RWPE1 (cell line): ENCODE measurements at regions of chr14 and their contacts with region 1.

Region 1: GRCh38 chr14:90399541-90400444 is 3.0 kb downstream of the CALM1 start:
- DNase-seq: peak; percentile 91
- H3K27ac ChIP-seq: peak overlapping the region; percentile 40
- CTCF ChIP-seq: peak; percentile 99

Region 2: DNA sequence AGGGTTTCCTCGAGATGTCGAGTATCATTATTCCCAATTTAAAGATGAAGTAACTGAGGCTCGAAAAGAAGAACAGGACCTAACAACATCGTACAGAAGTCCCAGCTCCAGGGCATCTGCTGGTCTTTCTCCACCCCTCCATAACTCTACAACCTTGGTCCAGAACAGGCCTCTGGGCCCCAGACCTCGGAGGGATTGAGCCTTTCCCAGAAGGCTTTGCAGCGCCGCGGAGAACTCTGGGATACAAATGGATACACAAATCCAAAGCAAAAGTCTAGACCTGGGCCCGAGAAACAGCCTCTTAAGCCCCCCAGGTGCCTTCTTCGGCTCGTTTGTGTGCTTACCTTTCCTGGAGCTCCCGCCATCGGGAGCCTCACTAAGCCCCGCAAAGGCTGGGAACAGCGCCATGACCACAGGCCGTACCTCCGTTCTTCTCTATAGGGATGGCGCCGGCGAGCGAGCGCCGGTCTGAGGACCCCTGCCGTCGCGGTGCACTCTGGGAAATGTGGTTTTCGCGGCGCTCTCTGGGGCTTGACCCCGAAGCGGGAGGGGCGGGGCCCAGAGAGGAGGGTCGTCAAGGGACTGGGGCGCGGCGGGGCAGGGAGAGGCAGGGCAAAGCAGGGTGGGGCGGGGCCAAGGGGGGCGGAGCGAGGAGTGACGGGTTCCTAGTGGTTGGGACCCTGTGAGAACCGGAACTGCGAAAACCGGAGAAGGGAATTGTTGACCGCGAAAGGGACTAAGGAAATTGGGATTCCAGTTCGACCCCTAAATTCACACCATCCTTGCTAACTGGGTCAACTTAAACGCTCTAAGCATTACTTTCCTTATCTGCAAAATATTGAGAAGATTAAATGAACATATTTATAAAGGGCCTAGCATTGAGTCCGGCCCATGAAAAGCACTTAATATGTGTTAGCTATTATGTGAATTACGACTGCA is 68.0 kb before region 1 on chr14 and contains the start of gene NRDE2:
- CTCF ChIA-PET with region 1: no interaction called
- POLR2A ChIA-PET with region 1: no interaction called
- DNase-seq: peak; percentile 94
- H3K27ac ChIP-seq: peak within 1 kb of the TSS; percentile 81
- CTCF ChIP-seq: no peak

Region 3: DNA sequence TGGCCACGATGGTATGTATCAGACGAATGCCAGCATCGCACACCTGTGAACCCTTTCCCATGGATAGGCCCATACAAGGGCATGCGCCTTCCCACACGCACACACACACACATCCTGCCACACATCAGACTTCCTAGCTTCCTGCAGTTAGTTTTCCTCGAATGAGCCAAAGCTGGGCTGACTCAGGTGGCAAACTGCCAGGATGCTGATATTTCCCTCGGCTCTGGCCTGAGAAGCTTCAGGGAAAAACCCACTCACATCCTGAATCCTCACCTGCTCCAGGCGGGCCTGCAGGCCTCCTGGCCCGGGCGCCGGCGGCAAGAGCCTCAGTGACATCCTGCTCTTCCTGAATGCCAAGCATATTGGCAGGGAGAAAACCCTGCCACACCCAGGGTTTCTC is 19.4 kb after region 1 on chr14:
- CTCF ChIA-PET with region 1: interaction called, 13 read pairs
- POLR2A ChIA-PET with region 1: no interaction called
- DNase-seq: peak; percentile 84
- H3K27ac ChIP-seq: peak overlapping the region; percentile 78
- CTCF ChIP-seq: no peak

Region 4: GRCh38 chr14:90599748-90600507 is 200.1 kb after region 1 on chr14:
- CTCF ChIA-PET with region 1: interaction called, 10 read pairs
- POLR2A ChIA-PET with region 1: no interaction called
- DNase-seq: no peak
- H3K27ac ChIP-seq: no peak overlapping the region
- CTCF ChIP-seq: no peak

Region 5: GRCh38 chr14:90697577-90698206 is 297.9 kb after region 1 on chr14:
- CTCF ChIA-PET with region 1: interaction called, 17 read pairs
- POLR2A ChIA-PET with region 1: interaction called, 3 read pairs
- DNase-seq: peak; percentile 88
- H3K27ac ChIP-seq: no peak overlapping the region
- CTCF ChIP-seq: peak; percentile 95